ENCODE measurements at regions of chr19 and their contacts with region 1.

Region 1: GRCh38 chr19:50537762-50538230 is 24.1 kb upstream of the ASPDH start:
- DNase-seq: peak; percentile 79
- ATAC-seq: peak; percentile 97
- H3K4me3 ChIP-seq: no peak overlapping the region
- H3K27ac ChIP-seq: no peak overlapping the region
- H3K4me1 ChIP-seq: no peaks in the 10 kb centered on the region
- H3K27me3 ChIP-seq: no peaks in the 10 kb centered on the region
- CTCF ChIP-seq: peak; percentile 93 to 98 (median 95)
- POLR2A ChIP-seq: no peak
- RAD21 ChIP-seq: peak; percentile 88

Region 2: GRCh38 chr19:50341091-50341564 is 196.7 kb before region 1 on chr19:
- CTCF ChIA-PET with region 1: no interaction called
- POLR2A ChIA-PET with region 1: no interaction called
- RAD21 ChIA-PET with region 1: no interaction called
- intact Hi-C with region 1: no loop called
- DNase-seq: no peak
- ATAC-seq: no peak
- H3K4me3 ChIP-seq: no peak overlapping the region
- H3K27ac ChIP-seq: no peak overlapping the region
- H3K4me1 ChIP-seq: no peaks in the 10 kb centered on the region
- H3K27me3 ChIP-seq: no peaks in the 10 kb centered on the region
- CTCF ChIP-seq: no peak
- POLR2A ChIP-seq: no peak
- RAD21 ChIP-seq: no peak

Region 3: GRCh38 chr19:50511068-50511822 is 26.6 kb before region 1 on chr19 and contains the start of gene JOSD2:
- CTCF ChIA-PET with region 1: interaction called, 11 read pairs
- POLR2A ChIA-PET with region 1: no interaction called
- RAD21 ChIA-PET with region 1: no interaction called
- intact Hi-C with region 1: no loop called
- DNase-seq: peak; percentile 99
- ATAC-seq: peak; percentile 93
- H3K4me3 ChIP-seq: peak within 1 kb of the TSS; percentile 82 to 90
- H3K27ac ChIP-seq: peak within 1 kb of the TSS; percentile 77
- H3K4me1 ChIP-seq: peaks cover 3 to 15% of the 10 kb centered on the region in 2 experiments; a peak in 3 of 4 replicates
- H3K27me3 ChIP-seq: no peaks in the 10 kb centered on the region
- CTCF ChIP-seq: no peak
- POLR2A ChIP-seq: peak; percentile 31
- RAD21 ChIP-seq: no peak
- total RNA-seq, gene JOSD2: 40.9 TPM

Region 4: DNA sequence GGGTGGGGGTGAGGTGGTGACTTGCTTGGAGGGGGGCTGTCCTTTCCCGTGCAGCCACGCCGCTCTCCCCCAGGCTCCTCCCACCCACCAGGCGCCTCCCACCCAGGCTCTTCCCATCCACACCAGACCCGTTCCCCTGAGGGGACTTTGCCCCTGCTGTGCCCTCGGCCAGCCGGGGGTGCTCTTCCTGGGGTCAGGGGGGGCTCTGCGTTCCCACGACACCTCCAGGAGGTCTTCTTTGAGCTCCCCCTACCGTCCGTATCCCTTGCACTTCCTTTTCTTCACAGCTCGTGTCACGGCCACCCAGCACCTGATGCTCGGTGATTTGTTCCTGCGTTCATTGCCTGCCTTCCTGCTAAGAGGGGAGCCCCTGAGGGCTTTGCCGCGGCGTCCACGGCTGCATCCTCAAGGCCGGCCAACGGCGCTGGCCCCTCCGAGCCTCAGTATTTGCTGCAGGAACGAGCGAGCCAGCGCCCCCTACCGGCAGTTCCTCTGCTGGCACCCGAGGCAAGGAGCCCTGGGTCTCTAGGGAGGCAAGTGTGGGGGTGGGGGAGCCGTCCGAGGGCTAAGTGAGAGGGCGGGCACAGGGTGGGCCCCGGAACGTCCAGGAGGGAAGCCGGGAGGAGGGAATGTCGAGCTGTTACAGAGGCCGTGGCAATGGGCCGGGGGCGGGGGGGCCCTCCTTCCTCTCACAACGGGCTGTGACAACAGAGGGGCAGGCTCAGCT is 18.6 kb after region 1 on chr19:
- CTCF ChIA-PET with region 1: interaction called, 40 read pairs
- POLR2A ChIA-PET with region 1: no interaction called
- RAD21 ChIA-PET with region 1: interaction called in 1 of 2 experiments, 7 read pairs
- intact Hi-C with region 1: no loop called
- DNase-seq: peak; percentile 49
- ATAC-seq: peak; percentile 92
- H3K4me3 ChIP-seq: peak overlapping the region; percentile 58 to 68
- H3K27ac ChIP-seq: peak overlapping the region; percentile 80
- H3K4me1 ChIP-seq: peaks cover 10 to 19% of the 10 kb centered on the region in 2 experiments; a peak in 3 of 4 replicates
- H3K27me3 ChIP-seq: no peaks in the 10 kb centered on the region
- CTCF ChIP-seq: peak; percentile 96 to 99 (median 99)
- POLR2A ChIP-seq: no peak
- RAD21 ChIP-seq: peak; percentile 50

Region 5: GRCh38 chr19:50705422-50706019 is 167.7 kb after region 1 on chr19:
- CTCF ChIA-PET with region 1: interaction called, 6 read pairs
- POLR2A ChIA-PET with region 1: no interaction called
- RAD21 ChIA-PET with region 1: no interaction called
- intact Hi-C with region 1: loop called (anchors 5 kb)
- DNase-seq: peak; percentile 56
- ATAC-seq: peak; percentile 87
- H3K4me3 ChIP-seq: no peak overlapping the region
- H3K27ac ChIP-seq: no peak overlapping the region
- H3K4me1 ChIP-seq: peaks cover 0 to 2% of the 10 kb centered on the region in 2 experiments; a peak in 2 of 4 replicates
- H3K27me3 ChIP-seq: no peaks in the 10 kb centered on the region; the same call in 1 of the 2 replicates
- CTCF ChIP-seq: peak; percentile 79 to 92 (median 85)
- POLR2A ChIP-seq: no peak
- RAD21 ChIP-seq: peak; percentile 87

Region 6: DNA sequence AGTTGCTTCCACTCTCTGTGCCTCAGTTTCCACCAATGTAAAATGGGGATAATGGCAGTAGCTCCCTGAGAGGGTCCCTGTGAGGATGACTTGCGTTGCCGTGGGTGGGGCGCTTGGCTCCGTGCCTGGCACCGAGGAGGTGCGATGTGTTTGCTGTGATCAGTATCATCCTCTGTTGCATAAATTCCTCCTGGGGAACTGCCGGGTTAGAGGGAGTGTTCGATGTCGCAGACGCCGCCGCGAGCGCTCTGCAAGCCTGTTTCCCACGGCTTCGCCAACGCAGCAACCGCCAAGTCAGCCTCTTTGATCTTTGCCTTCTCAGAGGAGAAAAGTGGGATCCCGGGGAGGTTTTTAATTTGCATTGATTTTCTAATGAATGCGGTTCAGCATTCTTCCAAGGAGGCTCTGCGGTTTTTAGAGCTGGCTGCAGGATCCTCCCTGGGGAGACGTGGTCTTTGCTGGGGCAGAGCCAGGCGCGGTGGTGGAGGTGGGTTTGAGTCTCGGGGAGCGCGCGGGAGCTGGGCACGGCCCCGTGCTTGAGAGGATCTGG is 240.0 kb after region 1 on chr19:
- CTCF ChIA-PET with region 1: interaction called, 21 read pairs
- POLR2A ChIA-PET with region 1: no interaction called
- RAD21 ChIA-PET with region 1: no interaction called
- intact Hi-C with region 1: loop called (anchors 1 kb)
- DNase-seq: no peak
- ATAC-seq: peak; percentile 67
- H3K4me3 ChIP-seq: peak overlapping the region; percentile 24 to 43
- H3K27ac ChIP-seq: no peak overlapping the region
- H3K4me1 ChIP-seq: peaks cover 6 to 17% of the 10 kb centered on the region in 2 experiments; a peak in 3 of 4 replicates
- H3K27me3 ChIP-seq: peaks cover 14% of the 10 kb centered on the region; the same call in 1 of the 2 replicates
- CTCF ChIP-seq: no peak
- POLR2A ChIP-seq: no peak
- RAD21 ChIP-seq: no peak